Activated B cell treated with CpG ODN at 0.5 μM for 24 hours (primary cell): ENCODE measurements at regions of chr10 and their contacts with region 1.

Region 1: GRCh38 chr10:63629363-63630084 is 108.3 kb downstream of the REEP3 start:
- DNase-seq: peak; percentile 67
- ATAC-seq: peak; percentile 60
- H3K4me3 Mint-ChIP-seq: peak overlapping the region; percentile 91
- H3K27ac Mint-ChIP-seq: peak overlapping the region; percentile 94
- H3K4me1 Mint-ChIP-seq: peaks cover 28% of the 10 kb centered on the region
- H3K27me3 Mint-ChIP-seq: no peaks in the 10 kb centered on the region
- CTCF ChIP-seq: peak; percentile 38

Region 2: GRCh38 chr10:62804356-62805230 is 824.9 kb before region 1 on chr10 and contains the start of gene ADO:
- CTCF ChIA-PET with region 1: no interaction called
- POLR2A ChIA-PET with region 1: no interaction called
- intact Hi-C with region 1: no loop called
- DNase-seq: peak; percentile 77
- ATAC-seq: peak; percentile 87
- H3K4me3 Mint-ChIP-seq: peak within 1 kb of the TSS; percentile 95
- H3K27ac Mint-ChIP-seq: peak within 1 kb of the TSS; percentile 99
- H3K4me1 Mint-ChIP-seq: peaks cover 41% of the 10 kb centered on the region
- H3K27me3 Mint-ChIP-seq: no peaks in the 10 kb centered on the region
- CTCF ChIP-seq: no peak
- total RNA-seq, gene ADO: 21.6 and 21.7 TPM in 2 replicates

Region 3: DNA sequence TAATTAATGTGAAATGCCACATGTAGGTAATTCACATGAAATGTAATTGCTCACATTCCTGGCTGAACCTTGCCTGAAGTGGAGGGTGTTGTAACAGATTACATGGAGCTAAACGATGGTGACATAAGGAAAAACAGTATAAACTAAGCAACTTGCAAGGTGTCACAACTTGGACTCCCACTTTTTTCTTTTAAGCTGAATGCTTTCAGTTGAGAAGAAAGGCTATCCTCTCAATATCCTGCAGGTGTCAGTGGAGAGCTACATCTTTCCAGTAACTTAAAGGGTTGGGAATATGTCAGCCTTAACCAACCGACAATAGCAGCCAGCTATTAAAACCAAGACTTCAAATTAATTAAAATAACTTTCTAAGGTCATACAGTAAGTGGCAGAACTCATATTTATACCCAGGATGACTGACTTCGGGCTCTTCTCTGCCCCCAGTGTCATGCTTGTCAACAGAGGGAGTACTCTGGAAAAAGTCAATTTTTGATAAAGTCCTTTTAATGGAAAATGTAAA is 462.7 kb before region 1 on chr10:
- CTCF ChIA-PET with region 1: interaction called, 85 read pairs
- POLR2A ChIA-PET with region 1: interaction called, 8 read pairs
- intact Hi-C with region 1: loop called (anchors 1 kb)
- DNase-seq: no peak
- ATAC-seq: peak; percentile 88
- H3K4me3 Mint-ChIP-seq: no peak overlapping the region
- H3K27ac Mint-ChIP-seq: peak overlapping the region; percentile 12
- H3K4me1 Mint-ChIP-seq: peaks cover 4% of the 10 kb centered on the region
- H3K27me3 Mint-ChIP-seq: no peaks in the 10 kb centered on the region
- CTCF ChIP-seq: no peak

Region 4: DNA sequence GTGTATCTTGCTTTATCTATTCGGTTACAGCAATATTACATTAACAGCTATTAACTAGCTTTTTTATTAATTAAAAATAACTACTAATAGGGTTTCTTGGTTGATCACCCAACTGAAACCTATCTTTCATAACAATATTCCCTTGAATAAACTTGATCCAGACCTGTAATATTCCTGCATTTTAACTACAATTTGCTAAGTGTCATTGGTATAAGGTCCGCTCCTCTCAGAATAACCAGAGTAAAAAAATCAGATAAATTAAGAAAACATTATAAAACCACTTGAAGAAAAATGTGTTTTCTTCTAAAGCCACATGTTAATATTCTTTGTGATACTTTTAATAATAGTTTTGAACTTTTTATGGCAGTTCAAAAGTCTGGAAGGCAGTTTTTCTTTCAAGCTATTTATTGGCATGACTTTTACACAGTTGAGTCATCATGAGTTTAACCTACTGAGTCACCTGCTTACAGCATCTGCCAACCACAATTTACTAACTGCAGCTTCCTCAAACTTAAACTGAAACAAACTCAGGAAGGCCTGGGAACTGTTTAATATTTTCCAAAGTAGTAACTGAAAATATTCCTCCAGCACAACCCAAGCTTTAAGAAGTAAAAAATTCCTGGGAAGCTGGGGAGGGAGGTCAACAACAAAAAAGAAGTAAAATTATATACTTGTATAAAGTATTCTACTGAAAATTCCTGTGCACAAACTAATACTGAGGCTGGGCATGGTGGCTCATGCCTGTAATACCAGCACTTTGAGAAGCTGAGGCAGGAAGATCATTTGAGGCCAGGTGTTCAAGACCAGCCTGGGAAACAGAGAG is 393.2 kb before region 1 on chr10:
- CTCF ChIA-PET with region 1: interaction called, 3 read pairs
- POLR2A ChIA-PET with region 1: interaction called, 10 read pairs
- intact Hi-C with region 1: no loop called
- DNase-seq: no peak
- ATAC-seq: peak; percentile 88
- H3K4me3 Mint-ChIP-seq: no peak overlapping the region
- H3K27ac Mint-ChIP-seq: peak overlapping the region; percentile 69
- H3K4me1 Mint-ChIP-seq: peaks cover 74% of the 10 kb centered on the region
- H3K27me3 Mint-ChIP-seq: no peaks in the 10 kb centered on the region
- CTCF ChIP-seq: no peak

Region 5: GRCh38 chr10:63421591-63421990 is 207.9 kb before region 1 on chr10:
- CTCF ChIA-PET with region 1: no interaction called
- POLR2A ChIA-PET with region 1: interaction called, 6 read pairs
- intact Hi-C with region 1: loop called (anchors 2 kb)
- DNase-seq: no peak
- ATAC-seq: peak; percentile 98
- H3K4me3 Mint-ChIP-seq: peak overlapping the region; percentile 30
- H3K27ac Mint-ChIP-seq: peak overlapping the region; percentile 87
- H3K4me1 Mint-ChIP-seq: peaks cover 29% of the 10 kb centered on the region
- H3K27me3 Mint-ChIP-seq: no peaks in the 10 kb centered on the region
- CTCF ChIP-seq: no peak

Region 6: DNA sequence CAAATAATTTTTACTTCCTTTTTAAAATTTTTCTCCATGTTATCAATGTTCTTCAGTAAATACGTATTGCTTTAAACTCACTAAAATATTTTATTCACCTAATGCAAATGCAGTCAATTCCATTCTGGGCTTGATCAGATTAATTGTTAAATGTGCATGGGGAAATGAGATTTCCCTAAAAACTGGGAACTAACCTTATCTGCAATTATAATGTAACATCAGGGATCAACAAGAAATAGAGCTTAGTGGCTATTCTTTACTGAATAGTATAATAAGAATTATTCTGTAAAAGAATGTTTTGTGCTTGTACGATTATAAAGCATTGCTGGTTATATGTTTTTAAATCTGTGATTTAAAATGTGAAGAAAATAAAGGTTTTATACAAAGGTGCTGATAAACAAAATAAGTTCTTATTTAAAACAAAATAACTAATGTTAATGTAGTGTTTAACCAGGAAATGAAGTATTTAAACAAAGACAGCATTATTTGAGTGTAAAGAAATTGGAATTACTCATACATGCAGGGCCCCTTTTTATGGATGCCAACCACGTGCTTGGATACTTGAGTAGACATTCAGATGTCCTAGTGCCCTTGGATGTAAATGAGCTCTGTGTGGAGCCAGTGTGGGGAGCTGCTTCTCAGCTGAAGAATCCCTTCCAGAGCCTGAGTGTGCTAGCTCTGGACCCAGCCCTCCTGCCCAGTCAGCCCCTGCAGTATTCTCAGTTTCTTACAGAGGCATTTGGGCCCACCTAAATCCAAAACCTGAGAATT is 24.1 kb before region 1 on chr10:
- CTCF ChIA-PET with region 1: interaction called, 9 read pairs
- POLR2A ChIA-PET with region 1: interaction called, 9 read pairs
- intact Hi-C with region 1: loop called (anchors 1 kb)
- DNase-seq: no peak
- ATAC-seq: no peak
- H3K4me3 Mint-ChIP-seq: no peak overlapping the region
- H3K27ac Mint-ChIP-seq: no peak overlapping the region
- H3K4me1 Mint-ChIP-seq: peaks cover 37% of the 10 kb centered on the region
- H3K27me3 Mint-ChIP-seq: no peaks in the 10 kb centered on the region
- CTCF ChIP-seq: no peak